K562 (cell line): ENCODE measurements at regions of chr16 and their contacts with region 1.

Region 1: DNA sequence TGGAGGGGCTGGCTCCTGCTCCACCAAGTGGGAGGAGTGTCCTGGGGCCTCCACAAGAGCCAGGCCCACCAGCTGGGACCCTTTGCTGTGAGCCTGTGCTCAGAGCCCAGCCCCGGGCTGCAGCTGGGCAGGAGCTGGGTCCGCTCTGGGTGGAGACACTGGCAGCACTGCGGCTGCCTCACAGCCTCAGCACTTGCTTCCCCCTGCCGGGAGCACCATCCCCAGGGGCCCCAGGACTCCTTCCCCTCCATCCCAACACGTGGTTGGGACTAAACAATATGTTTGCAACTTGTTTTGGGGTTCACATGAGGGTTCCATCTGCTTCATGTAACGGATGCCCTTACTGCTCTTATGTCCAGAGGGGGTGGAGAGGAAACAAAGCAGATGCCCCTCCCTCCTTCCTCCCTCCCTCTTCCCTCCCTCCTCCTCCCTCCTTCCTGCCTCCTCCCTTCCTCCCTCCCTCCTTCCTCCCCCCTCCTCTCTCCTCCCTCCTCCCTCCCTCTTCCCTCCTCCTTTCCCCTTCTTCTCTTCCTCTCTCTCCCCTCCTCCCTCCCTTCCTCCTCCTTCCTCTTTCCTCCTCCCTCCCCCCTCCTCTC is 16.3 kb upstream of the CBFA2T3 start:
- DNase-seq: peak in 2 of 4 experiments; percentile 65 to 90
- ATAC-seq: peak; percentile 20
- H3K4me3 ChIP-seq: peak overlapping the region; percentile 35
- H3K27ac ChIP-seq: peak overlapping the region; percentile 97
- H3K4me1 ChIP-seq: peaks cover 54 to 82% of the 10 kb centered on the region in 2 experiments
- H3K27me3 ChIP-seq: no peaks in the 10 kb centered on the region
- CTCF ChIP-seq: no peak
- EP300 ChIP-seq: peak; percentile 49; the same call in 1 of the 2 replicates
- POLR2A ChIP-seq: peak; percentile 70
- RAD21 ChIP-seq: no peak

Region 2: DNA sequence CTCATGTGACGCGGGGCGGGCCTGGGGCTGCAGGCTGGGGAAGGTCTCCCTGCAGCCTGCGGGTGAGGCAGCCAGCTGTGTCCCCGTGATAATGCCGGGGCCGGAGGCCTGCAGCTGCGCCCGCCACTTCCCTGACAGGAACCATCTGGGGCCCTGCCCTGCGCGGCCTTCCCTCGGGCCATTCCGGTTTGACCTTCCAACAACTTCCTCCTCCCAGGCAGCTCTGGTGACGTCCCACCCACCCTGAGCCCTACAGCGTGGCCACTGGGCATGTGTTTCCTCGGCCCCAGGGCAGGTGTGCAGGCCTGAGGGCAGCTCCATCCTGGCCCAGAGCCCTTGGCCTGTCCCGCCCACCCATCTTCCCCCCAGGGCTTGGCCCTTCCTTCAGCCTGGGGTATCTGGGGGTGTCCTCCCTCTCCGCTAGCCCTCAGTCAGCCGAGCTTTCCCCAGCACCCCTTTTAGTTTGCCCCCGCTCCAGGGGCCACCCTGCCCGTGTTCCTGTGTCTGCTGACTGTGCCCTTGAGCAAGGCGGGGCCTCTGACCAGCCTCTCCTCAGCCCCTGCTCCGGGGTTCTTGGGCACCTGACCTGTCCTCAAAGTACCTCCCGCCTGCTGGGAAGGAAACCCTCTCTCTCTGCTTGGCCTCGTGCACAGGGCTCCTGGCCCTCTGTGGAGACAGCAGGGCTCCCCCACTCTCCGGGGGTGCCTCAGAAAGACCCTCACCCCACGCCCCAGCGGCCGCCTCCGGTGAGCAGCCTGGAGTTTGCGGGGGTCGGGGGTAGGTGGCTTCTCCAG is 16.0 kb before region 1 on chr16 and contains the start of gene CBFA2T3:
- CTCF ChIA-PET with region 1: no interaction called
- POLR2A ChIA-PET with region 1: interaction called, 6 read pairs
- in situ Hi-C with region 1: no loop called
- intact Hi-C with region 1: loop called (anchors 1 kb)
- DNase-seq: peak; percentile 79 to 96 (median 88)
- ATAC-seq: peak; percentile 68
- H3K4me3 ChIP-seq: peak within 1 kb of the TSS; percentile 85
- H3K27ac ChIP-seq: peak within 1 kb of the TSS; percentile 98
- H3K4me1 ChIP-seq: peaks cover 49 to 90% of the 10 kb centered on the region in 2 experiments
- H3K27me3 ChIP-seq: no peaks in the 10 kb centered on the region
- CTCF ChIP-seq: no peak
- EP300 ChIP-seq: peak; percentile 80
- POLR2A ChIP-seq: peak; percentile 44
- RAD21 ChIP-seq: peak in 1 of 2 experiments; percentile 7; a peak in 2 of 4 replicates
- polyA plus RNA-seq, gene CBFA2T3: 2.3 to 2.7 TPM

Region 3: DNA sequence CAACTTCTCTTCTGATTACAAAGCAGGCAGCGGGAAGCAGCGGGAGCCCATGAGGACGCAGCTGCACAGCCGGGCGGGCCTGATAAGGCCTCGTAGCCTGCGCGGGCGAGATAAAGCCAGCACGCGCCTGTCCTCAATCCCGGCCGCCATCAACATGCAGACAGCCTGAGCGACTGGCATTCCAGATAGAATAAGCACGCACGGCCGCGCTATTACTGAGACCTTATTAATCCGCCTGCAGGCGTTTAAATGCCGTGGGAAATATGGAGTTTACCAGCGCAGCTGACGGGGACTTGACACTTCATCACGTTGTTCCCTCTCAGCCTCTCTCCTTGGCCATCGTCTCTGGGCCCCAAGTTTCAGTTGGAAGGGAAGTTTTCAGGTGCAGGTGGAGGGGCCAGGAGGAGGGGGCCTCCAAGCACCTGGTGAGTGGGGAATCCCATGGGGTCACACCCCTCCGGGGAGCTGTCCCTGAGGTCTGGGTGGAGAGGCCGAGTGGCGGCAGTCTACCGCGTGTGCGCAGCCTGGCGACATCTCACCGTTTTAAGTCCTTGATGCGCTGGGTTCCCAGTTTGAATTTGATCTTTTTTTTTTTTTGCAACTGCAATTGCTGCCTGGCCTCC is 11.1 kb after region 1 on chr16:
- CTCF ChIA-PET with region 1: no interaction called
- POLR2A ChIA-PET with region 1: interaction called, 5 read pairs
- in situ Hi-C with region 1: no loop called
- intact Hi-C with region 1: loop called (anchors 1 kb)
- DNase-seq: peak; percentile 95 to 99 (median 96)
- ATAC-seq: peak; percentile 91
- H3K4me3 ChIP-seq: no peak overlapping the region
- H3K27ac ChIP-seq: peak overlapping the region; percentile 69
- H3K4me1 ChIP-seq: peaks cover 25 to 67% of the 10 kb centered on the region in 2 experiments
- H3K27me3 ChIP-seq: no peaks in the 10 kb centered on the region
- CTCF ChIP-seq: peak in 2 of 3 experiments; percentile 5 to 11; a peak in 1 of 6 replicates
- EP300 ChIP-seq: peak; percentile 99
- POLR2A ChIP-seq: no peak
- RAD21 ChIP-seq: peak; percentile 38 to 44

Region 4: DNA sequence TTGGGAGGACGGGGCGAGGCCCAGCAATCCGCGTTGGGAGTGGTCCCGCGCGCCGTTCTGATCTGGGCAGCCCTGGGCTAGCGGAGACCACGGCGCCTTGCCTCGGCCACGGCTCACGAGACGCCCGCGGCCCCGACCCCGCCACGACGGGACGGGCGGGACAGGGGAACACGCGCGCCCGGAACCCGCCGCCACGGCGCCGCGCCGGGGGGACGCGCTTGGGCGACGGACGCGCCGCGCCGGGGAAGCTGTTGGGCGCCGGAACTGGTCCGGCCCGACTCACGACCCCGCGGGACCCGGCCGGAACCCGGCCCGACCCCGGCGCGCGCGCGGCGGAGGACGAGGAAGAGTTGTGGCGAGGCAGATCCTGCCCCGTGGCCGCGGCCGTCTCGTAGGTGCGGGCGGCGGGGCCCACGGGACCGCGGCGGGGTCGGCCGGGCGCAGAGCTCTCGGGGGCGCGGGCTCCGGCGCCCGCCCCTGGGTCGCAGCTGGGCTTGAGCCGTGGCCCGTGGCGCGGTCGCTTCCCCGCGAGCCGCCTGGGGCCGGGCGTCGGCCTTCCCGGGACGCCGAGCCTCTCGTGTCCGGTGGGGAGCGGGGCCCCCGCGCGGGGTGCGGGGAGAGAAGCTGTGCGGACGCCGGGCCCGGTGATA is 100.5 kb after region 1 on chr16 and contains the start of gene ACSF3:
- CTCF ChIA-PET with region 1: no interaction called
- POLR2A ChIA-PET with region 1: interaction called, 3 read pairs
- in situ Hi-C with region 1: no loop called
- intact Hi-C with region 1: loop called (anchors 5 kb)
- DNase-seq: peak; percentile 81 to 92 (median 90)
- ATAC-seq: peak; percentile 81
- H3K4me3 ChIP-seq: peak within 1 kb of the TSS; percentile 88
- H3K27ac ChIP-seq: peak within 1 kb of the TSS; percentile 68
- H3K4me1 ChIP-seq: peaks cover 30 to 84% of the 10 kb centered on the region in 2 experiments; a peak in 4 of 5 replicates
- H3K27me3 ChIP-seq: peaks cover 11 to 20% of the 10 kb centered on the region in 2 experiments; a peak in 4 of 5 replicates
- CTCF ChIP-seq: no peak
- EP300 ChIP-seq: peak; percentile 7; the same call in 1 of the 2 replicates
- POLR2A ChIP-seq: peak; percentile 59
- RAD21 ChIP-seq: peak in 1 of 2 experiments; percentile 39; a peak in 2 of 4 replicates
- polyA plus RNA-seq, gene ACSF3: 0.77 to 1.9 TPM